ENCODE measurements at regions of chr7 and their contacts with region 1.

Region 1: GRCh38 chr7:31043051-31043471 is 9.0 kb upstream of the ADCYAP1R1 start:
- DNase-seq: no peak
- ATAC-seq: no peak
- H3K4me3 ChIP-seq: no peak overlapping the region
- H3K27ac ChIP-seq: no peak overlapping the region
- H3K4me1 ChIP-seq: no peaks in the 10 kb centered on the region
- H3K27me3 ChIP-seq: peaks cover 0 to 43% (median 17%) of the 10 kb centered on the region in 7 donors
- CTCF ChIP-seq: no peak

Region 2: DNA sequence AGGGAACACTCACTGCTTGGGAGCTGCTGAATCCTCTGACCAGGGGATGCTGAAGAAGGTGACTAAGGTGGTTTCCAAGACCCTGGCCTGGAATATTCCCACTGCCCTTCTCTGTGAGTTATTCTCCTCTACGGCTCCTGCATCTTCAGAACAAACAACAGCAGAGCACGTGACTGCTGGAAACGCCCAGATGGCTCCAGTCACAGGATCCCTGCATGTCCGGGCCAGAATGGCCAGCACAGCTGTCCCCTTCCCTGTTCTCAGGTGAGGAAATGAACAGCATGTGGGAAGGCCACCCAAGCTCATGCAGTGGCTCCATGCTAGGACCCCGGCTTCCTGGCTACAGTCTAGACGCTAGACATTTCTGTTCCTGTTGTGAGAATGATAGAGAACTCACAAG is 36.2 kb before region 1 on chr7:
- intact Hi-C with region 1: loop called in 1 of 10 experiments (anchors 5 kb)
- DNase-seq: no peak
- ATAC-seq: peak in 4 of 8 donors; percentile 21 to 75 (median 38)
- H3K4me3 ChIP-seq: no peak overlapping the region
- H3K27ac ChIP-seq: peak overlapping the region in 1 of 10 donors; percentile 35
- H3K4me1 ChIP-seq: peaks cover 0 to 9% (median 0%) of the 10 kb centered on the region in 9 donors
- H3K27me3 ChIP-seq: peaks cover 0 to 14% (median 6%) of the 10 kb centered on the region in 7 donors
- CTCF ChIP-seq: no peak

Region 3: GRCh38 chr7:31122649-31123058 is 79.6 kb after region 1 on chr7:
- intact Hi-C with region 1: no loop called
- DNase-seq: peak; percentile 40 to 77
- ATAC-seq: peak; percentile 64 to 86 (median 80)
- H3K4me3 ChIP-seq: no peak overlapping the region
- H3K27ac ChIP-seq: no peak overlapping the region
- H3K4me1 ChIP-seq: peaks cover 0 to 6% (median 0%) of the 10 kb centered on the region in 9 donors
- H3K27me3 ChIP-seq: peaks cover 0 to 7% (median 0%) of the 10 kb centered on the region in 7 donors
- CTCF ChIP-seq: peak; percentile 77 to 93 (median 89)